ENCODE measurements at regions of chr18 and their contacts with region 1.

Region 1: DNA sequence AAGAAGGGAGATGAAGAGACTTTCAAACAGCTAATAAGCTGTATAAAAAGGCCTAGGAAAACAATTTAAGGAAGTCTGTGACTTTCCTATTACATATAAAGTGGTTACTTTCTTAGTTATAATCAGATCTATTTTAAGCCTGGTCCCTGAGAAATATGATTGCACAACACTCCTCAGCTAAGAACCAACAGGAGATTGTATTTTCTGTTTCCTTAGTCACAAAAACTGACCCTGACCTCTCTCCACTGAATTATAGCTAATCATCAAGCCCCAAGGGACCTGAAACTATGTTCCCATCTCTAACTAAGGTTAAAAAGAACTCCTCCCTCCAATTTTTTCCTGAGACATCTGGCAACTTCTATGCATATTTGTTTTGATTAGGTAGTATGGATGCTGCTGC is 106.9 kb downstream of the ROCK1 start:
- DNase-seq: no peak
- ATAC-seq: peak; percentile 76 to 97 (median 90)
- H3K4me3 ChIP-seq: no peak overlapping the region
- H3K27ac ChIP-seq: peak overlapping the region; percentile 50
- H3K4me1 ChIP-seq: peaks cover 15% of the 10 kb centered on the region
- H3K27me3 ChIP-seq: no peaks in the 10 kb centered on the region
- CTCF ChIP-seq: no peak

Region 2: DNA sequence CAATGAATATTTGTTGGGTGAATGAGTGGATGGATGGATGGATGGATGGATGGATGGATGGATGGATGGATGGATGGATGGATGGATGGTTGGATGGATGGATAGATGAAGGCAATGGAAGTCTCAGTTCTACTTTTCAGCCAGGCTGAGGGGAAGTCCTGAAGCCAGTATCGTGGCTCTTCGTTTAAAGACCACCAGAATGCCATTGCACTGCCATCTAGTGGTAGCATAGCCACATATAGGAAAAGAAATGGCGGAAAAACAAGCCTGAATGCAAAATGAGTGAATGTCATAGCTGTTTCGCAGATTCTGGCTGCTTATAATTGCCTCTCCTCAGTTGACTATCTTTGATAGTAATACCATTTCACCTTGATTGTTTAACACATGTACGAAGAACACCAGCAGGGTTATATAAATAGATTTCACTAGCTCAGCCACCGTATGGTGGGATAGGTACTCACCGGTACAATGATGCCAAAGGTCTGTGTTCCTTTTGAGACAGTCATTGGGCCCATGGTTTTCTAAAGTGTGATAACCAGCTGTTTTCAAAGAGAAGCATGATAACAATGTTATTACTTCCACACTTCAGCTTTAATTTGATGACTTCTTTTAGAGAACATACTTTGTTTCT is 175.0 kb after region 1 on chr18:
- intact Hi-C with region 1: loop called in 1 of 2 experiments (anchors 5 kb)
- DNase-seq: no peak
- ATAC-seq: peak in 2 of 4 donors; percentile 67
- H3K4me3 ChIP-seq: no peak overlapping the region
- H3K27ac ChIP-seq: no peak overlapping the region
- H3K4me1 ChIP-seq: no peaks in the 10 kb centered on the region
- H3K27me3 ChIP-seq: no peaks in the 10 kb centered on the region
- CTCF ChIP-seq: peak; percentile 62